GM23248 (cell line): ENCODE measurements at regions of chr4 and their contacts with region 1.

Region 1: GRCh38 chr4:157961229-157961990 is 211.4 kb downstream of the GASK1B start:
- DNase-seq: no peak
- H3K4me3 ChIP-seq: no peak overlapping the region
- H3K27ac ChIP-seq: no peak overlapping the region
- H3K4me1 ChIP-seq: no peaks in the 10 kb centered on the region
- H3K27me3 ChIP-seq: no peaks in the 10 kb centered on the region; the same call in 1 of the 2 replicates

Region 2: DNA sequence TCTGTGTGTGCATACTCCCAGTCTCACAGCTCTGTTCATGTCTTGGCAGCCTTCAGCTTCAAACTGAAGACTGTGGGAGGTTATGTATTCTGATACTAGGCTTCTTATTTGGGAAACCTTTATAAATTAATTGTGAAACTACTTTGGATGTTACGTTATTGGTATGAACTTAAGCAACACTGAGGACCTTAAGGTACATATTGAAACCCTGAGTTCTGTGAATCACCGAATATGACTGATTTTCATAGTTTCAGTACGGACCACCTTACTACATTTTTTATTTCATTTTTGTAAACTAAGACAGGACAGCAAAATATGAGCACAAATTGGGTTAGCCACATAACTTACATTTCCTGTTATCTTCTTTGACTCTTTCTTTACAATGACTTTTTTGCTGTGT is 1488.3 kb before region 1 on chr4:
- in situ Hi-C with region 1: loop called (anchors 25 kb)
- DNase-seq: no peak
- H3K4me3 ChIP-seq: no peak overlapping the region
- H3K27ac ChIP-seq: no peak overlapping the region
- H3K4me1 ChIP-seq: peaks cover 30% of the 10 kb centered on the region
- H3K27me3 ChIP-seq: no peaks in the 10 kb centered on the region

Region 3: DNA sequence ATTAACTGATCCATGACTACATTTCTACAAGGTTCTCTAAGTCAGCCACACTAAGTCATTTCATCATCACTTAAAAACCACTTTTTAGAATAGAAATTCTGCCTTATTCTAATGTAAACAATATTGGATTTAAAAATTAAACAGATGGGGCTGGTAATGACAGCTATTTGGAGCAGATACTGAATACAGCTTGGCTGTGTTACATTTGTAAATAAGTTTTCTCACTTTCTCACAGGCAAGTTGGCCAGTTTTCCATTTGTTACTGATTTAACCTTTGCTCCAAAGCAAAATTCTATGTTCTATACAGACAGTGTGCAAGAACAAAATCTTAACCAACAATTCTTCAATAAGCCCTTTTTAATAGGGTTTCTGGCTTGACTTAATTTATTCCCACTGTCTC is 370.2 kb before region 1 on chr4:
- in situ Hi-C with region 1: no loop called
- DNase-seq: no peak
- H3K4me3 ChIP-seq: no peak overlapping the region
- H3K27ac ChIP-seq: no peak overlapping the region
- H3K4me1 ChIP-seq: no peaks in the 10 kb centered on the region
- H3K27me3 ChIP-seq: no peaks in the 10 kb centered on the region

Region 4: DNA sequence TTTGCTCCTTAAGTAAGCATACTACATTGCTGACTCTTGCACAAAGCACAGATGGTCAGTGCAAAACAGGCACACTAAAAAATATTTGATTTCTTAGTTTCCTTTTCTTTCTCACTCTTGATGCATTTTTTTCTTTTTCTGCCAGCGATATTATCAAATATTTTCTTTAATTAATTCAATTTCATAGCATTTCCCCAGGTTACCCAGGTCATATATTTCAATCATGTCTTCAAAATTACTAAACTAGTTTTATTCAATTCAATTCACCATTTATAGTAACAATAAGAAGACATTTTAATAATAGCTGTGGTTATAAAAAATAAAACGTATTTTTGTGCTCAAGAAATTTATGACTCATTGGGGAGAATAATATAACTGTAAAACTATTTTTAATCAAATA is 209.8 kb before region 1 on chr4:
- in situ Hi-C with region 1: no loop called
- DNase-seq: no peak
- H3K4me3 ChIP-seq: no peak overlapping the region
- H3K27ac ChIP-seq: no peak overlapping the region
- H3K4me1 ChIP-seq: no peaks in the 10 kb centered on the region
- H3K27me3 ChIP-seq: no peaks in the 10 kb centered on the region